Activated CD4-positive, alpha-beta memory T cell treated with anti-CD3 and anti-CD28 coated beads for 36 hours (primary cell): ENCODE measurements at regions of chr3 and their contacts with region 1.

Region 1: GRCh38 chr3:4493014-4493940 is at the start of gene ITPR1:
- DNase-seq: peak; percentile 98
- H3K4me3 Mint-ChIP-seq: peak within 1 kb of the TSS; percentile 91
- H3K27ac Mint-ChIP-seq: peak within 1 kb of the TSS; percentile 79
- H3K4me1 Mint-ChIP-seq: peaks cover 41% of the 10 kb centered on the region
- H3K27me3 Mint-ChIP-seq: peaks cover 5% of the 10 kb centered on the region
- total RNA-seq, gene ITPR1: 49.1 to 53.1 TPM

Region 2: GRCh38 chr3:4350789-4351163 is 142.5 kb before region 1 on chr3:
- CTCF ChIA-PET with region 1: interaction called, 48 read pairs
- POLR2A ChIA-PET with region 1: interaction called, 20 read pairs
- intact Hi-C with region 1: loop called (anchors 1 kb)
- DNase-seq: peak; percentile 53
- H3K4me3 Mint-ChIP-seq: peak overlapping the region; percentile 45
- H3K27ac Mint-ChIP-seq: peak overlapping the region; percentile 92
- H3K4me1 Mint-ChIP-seq: peaks cover 21% of the 10 kb centered on the region
- H3K27me3 Mint-ChIP-seq: no peaks in the 10 kb centered on the region

Region 3: DNA sequence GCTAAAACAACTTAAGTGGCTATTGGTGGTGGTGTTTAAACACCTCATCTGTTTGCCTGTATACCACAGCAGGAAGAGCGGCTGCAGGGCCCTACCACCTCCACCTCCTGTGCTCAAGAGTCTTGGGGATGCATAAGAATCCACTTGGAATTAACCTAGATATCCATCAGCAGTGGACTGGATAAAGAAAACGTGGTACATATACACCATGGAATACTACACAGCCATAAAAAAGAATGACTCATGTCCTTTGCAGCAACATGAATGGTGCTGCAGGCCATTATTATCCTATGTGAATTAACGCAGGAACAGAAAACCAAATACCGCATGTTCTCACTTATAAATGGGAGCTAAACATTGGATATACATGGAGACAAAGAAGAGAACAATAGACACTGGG is 113.3 kb before region 1 on chr3:
- CTCF ChIA-PET with region 1: no interaction called
- POLR2A ChIA-PET with region 1: no interaction called
- intact Hi-C with region 1: no loop called
- DNase-seq: no peak
- H3K4me3 Mint-ChIP-seq: no peak overlapping the region
- H3K27ac Mint-ChIP-seq: no peak overlapping the region
- H3K4me1 Mint-ChIP-seq: no peaks in the 10 kb centered on the region
- H3K27me3 Mint-ChIP-seq: no peaks in the 10 kb centered on the region

Region 4: GRCh38 chr3:4421121-4421520 is 72.2 kb before region 1 on chr3:
- CTCF ChIA-PET with region 1: no interaction called
- POLR2A ChIA-PET with region 1: interaction called, 3 read pairs
- intact Hi-C with region 1: loop called (anchors 1 kb)
- DNase-seq: peak; percentile 60
- H3K4me3 Mint-ChIP-seq: no peak overlapping the region
- H3K27ac Mint-ChIP-seq: peak overlapping the region; percentile 56
- H3K4me1 Mint-ChIP-seq: peaks cover 53% of the 10 kb centered on the region
- H3K27me3 Mint-ChIP-seq: no peaks in the 10 kb centered on the region

Region 5: DNA sequence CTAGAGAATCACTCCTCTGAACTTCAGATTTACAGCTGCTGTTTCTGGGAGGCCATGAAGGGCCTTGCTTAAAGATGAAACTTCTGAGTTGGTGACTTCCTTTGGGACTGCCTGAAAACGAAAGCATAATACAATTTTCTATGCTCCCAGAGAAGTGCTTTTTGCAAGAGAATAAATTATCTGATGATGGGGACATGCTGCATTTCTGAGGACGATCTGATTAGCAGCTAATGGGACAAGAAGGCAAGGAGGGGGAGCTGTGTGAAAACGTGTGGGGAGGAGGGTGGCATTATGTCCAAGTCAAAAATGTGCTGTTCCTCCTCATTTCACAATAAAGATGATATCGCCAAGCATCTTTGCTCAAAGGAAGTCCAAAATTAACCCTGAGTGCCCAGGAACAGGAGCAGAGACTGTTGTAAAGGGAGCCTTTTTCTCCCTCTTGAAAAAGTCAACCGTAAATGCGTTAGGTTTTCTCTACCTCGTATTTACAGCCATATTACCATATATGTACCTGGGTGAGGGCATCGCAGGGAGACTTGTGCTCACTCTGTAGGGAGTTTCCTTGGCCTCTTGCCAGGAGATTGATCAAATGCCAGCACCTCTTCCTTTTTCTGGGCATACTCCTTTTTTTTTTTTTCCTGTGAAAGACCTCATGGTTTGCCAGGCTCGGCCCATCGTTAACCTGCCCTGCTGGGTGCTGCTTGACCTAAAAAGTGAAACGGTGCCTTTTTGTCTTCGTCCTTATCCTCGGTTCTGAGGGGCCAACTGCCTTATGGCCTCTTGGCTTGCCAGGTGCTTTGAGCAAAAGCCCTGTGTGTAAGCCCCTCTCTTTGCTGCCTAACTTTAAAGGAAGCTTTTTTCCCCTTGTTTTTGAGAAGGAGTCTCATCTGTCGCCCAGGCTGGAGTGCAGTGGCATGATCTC is 11.3 kb after region 1 on chr3:
- CTCF ChIA-PET with region 1: interaction called, 7 read pairs
- POLR2A ChIA-PET with region 1: interaction called, 46 read pairs
- intact Hi-C with region 1: loop called (anchors 1 kb)
- DNase-seq: peak; percentile 44
- H3K4me3 Mint-ChIP-seq: peak overlapping the region; percentile 75
- H3K27ac Mint-ChIP-seq: peak overlapping the region; percentile 84
- H3K4me1 Mint-ChIP-seq: peaks cover 50% of the 10 kb centered on the region
- H3K27me3 Mint-ChIP-seq: no peaks in the 10 kb centered on the region

Region 6: GRCh38 chr3:4584456-4585249 is 91.4 kb after region 1 on chr3:
- CTCF ChIA-PET with region 1: no interaction called
- POLR2A ChIA-PET with region 1: interaction called, 3 read pairs
- intact Hi-C with region 1: loop called (anchors 1 kb)
- DNase-seq: peak; percentile 48
- H3K4me3 Mint-ChIP-seq: peak overlapping the region; percentile 81
- H3K27ac Mint-ChIP-seq: peak overlapping the region; percentile 73
- H3K4me1 Mint-ChIP-seq: peaks cover 66% of the 10 kb centered on the region
- H3K27me3 Mint-ChIP-seq: no peaks in the 10 kb centered on the region

Region 7: DNA sequence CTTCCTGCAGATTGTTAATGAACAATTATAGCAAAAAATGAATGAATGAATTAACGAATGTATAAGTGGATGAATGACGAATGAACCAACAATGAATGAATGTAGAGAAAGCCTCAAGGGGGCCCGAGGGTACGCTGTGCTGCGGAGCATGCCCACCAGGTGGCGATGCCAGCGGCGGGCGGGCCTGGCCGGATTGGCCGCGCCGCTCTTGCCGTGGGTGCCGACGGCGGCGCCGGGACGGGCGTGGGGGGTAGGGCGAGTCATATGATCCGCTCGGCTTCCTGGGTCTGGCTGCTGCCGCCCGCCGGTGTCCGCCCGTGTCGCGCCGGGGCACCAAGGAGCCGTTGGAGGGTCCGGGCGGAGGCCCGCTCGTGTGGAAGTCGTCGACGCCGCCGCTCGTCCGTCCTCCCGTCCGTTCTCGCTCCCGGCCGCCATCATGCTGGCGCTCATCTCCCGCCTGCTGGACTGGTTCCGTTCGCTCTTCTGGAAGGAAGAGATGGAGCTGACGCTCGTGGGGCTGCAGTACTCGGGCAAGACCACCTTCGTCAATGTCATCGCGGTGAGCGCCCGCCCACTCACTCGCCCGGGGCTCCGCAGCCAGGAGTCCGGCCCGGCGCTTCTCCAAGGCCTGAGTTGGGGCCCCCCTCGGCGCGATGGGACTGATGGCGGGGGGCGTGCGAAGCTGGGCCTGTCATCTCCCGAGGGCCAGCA is 628.9 kb after region 1 on chr3 and contains the start of gene ARL8B:
- CTCF ChIA-PET with region 1: no interaction called
- POLR2A ChIA-PET with region 1: no interaction called
- intact Hi-C with region 1: loop called (anchors 2 kb)
- DNase-seq: peak; percentile 95
- H3K4me3 Mint-ChIP-seq: peak within 1 kb of the TSS; percentile 85
- H3K27ac Mint-ChIP-seq: peak within 1 kb of the TSS; percentile 92
- H3K4me1 Mint-ChIP-seq: peaks cover 41% of the 10 kb centered on the region
- H3K27me3 Mint-ChIP-seq: no peaks in the 10 kb centered on the region
- total RNA-seq, gene ARL8B: 55.4 to 58.5 TPM